B cell (primary cell): ENCODE measurements at regions of chr7 and their contacts with region 1.

Region 1: GRCh38 chr7:106476751-106477150 is 184.2 kb downstream of the CCDC71L start:
- DNase-seq: no peak
- ATAC-seq: no peak
- H3K4me3 ChIP-seq: no peak overlapping the region
- H3K4me3 Mint-ChIP-seq: no peak overlapping the region
- H3K27ac ChIP-seq: no peak overlapping the region
- H3K27ac Mint-ChIP-seq: no peak overlapping the region
- H3K4me1 ChIP-seq: no peaks in the 10 kb centered on the region
- H3K4me1 Mint-ChIP-seq: no peaks in the 10 kb centered on the region
- H3K27me3 ChIP-seq: no peaks in the 10 kb centered on the region
- H3K27me3 Mint-ChIP-seq: peaks cover 14% of the 10 kb centered on the region
- CTCF ChIP-seq: no peak

Region 2: GRCh38 chr7:106461993-106462859 is 14.5 kb before region 1 on chr7:
- CTCF ChIA-PET with region 1: interaction called, 20 read pairs
- POLR2A ChIA-PET with region 1: no interaction called
- intact Hi-C with region 1: no loop called
- DNase-seq: peak; percentile 58
- ATAC-seq: peak; percentile 49
- H3K4me3 ChIP-seq: no peak overlapping the region
- H3K4me3 Mint-ChIP-seq: no peak overlapping the region
- H3K27ac ChIP-seq: no peak overlapping the region
- H3K27ac Mint-ChIP-seq: no peak overlapping the region
- H3K4me1 ChIP-seq: peaks cover 11 to 23% of the 10 kb centered on the region in 2 donors
- H3K4me1 Mint-ChIP-seq: peaks cover 15% of the 10 kb centered on the region
- H3K27me3 ChIP-seq: no peaks in the 10 kb centered on the region
- H3K27me3 Mint-ChIP-seq: no peaks in the 10 kb centered on the region
- CTCF ChIP-seq: peak; percentile 70

Region 3: DNA sequence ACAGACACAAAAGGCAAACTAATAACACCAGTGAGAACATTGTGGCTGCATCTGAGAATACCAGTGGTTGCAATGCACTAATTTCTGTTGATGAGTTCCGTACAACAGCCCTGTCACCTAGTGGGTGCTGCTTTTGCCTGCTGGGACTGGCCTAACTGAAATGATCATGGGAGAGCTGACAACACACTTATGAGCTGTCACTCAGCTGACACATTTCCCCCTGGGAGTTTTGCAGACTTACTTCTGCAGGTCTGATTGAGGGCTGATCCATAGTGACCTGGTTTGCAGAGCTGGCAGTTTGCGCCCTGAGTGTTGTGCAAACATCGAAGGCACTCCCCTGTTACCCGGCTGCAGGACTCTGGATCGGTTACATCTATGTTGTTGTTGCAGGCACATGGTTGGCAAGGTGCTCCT is 1586.8 kb after region 1 on chr7:
- CTCF ChIA-PET with region 1: no interaction called
- POLR2A ChIA-PET with region 1: no interaction called
- intact Hi-C with region 1: no loop called
- DNase-seq: no peak
- ATAC-seq: no peak
- H3K4me3 ChIP-seq: no peak overlapping the region
- H3K4me3 Mint-ChIP-seq: no peak overlapping the region
- H3K27ac ChIP-seq: no peak overlapping the region
- H3K27ac Mint-ChIP-seq: no peak overlapping the region
- H3K4me1 ChIP-seq: no peaks in the 10 kb centered on the region
- H3K4me1 Mint-ChIP-seq: no peaks in the 10 kb centered on the region
- H3K27me3 ChIP-seq: no peaks in the 10 kb centered on the region
- H3K27me3 Mint-ChIP-seq: peaks cover 24% of the 10 kb centered on the region
- CTCF ChIP-seq: no peak